ENCODE measurements at regions of chr11 and their contacts with region 1.

Region 1: GRCh38 chr11:4393209-4393857 is at the start of gene TRIM21:
- DNase-seq: peak; percentile 84
- H3K4me3 ChIP-seq: peak within 1 kb of the TSS; percentile 58 to 85 (median 85)
- H3K27ac ChIP-seq: peak within 1 kb of the TSS; percentile 4
- H3K4me1 ChIP-seq: peaks cover 3% of the 10 kb centered on the region
- H3K27me3 ChIP-seq: no peaks in the 10 kb centered on the region
- CTCF ChIP-seq: no peak
- POLR2A ChIP-seq: peak; percentile 40
- total RNA-seq, gene TRIM21: 19.1 and 20.8 TPM in 2 replicates

Region 2: DNA sequence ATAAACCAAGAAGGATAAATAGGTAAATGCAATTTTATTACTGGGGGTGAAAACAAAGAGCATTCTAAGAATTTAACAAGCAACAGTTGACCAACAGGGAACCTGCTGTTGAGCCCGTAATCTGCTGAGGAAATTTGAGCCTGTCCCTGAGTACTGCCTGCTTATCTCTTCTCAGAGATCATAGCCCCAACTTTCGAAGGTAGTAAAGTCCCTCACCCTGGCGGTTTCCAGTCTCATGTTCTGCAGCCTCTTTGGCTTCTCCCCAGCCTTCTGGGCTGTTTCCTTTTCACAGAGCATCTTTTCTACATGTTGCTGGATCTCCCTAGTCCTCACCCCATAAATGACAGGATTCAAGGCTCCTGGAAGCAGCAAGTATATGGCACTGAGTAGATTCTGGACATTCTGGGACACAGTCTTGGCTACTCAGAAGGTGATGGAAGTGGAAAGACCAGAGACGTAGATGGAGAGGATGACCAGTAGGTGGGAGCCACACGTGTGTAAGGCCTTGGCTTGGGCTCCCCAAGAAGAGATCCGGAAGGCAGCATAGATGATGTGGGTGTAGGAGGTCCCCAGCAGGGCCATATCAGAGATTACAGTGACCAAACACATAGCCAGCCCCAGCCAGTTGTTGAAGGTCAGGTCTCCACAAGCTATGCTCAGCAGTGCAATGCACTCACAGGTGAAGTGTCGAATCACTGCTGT is 247.1 kb before region 1 on chr11:
- CTCF ChIA-PET with region 1: no interaction called
- POLR2A ChIA-PET with region 1: no interaction called
- dilution Hi-C with region 1: no loop called
- intact Hi-C with region 1: no loop called
- DNase-seq: no peak
- H3K4me3 ChIP-seq: no peak overlapping the region
- H3K27ac ChIP-seq: no peak overlapping the region
- H3K4me1 ChIP-seq: no peaks in the 10 kb centered on the region
- H3K27me3 ChIP-seq: peaks cover 0 to 1% of the 10 kb centered on the region in 2 experiments
- CTCF ChIP-seq: no peak
- POLR2A ChIP-seq: no peak

Region 3: GRCh38 chr11:4480574-4481566 is 87.5 kb after region 1 on chr11:
- CTCF ChIA-PET with region 1: no interaction called
- POLR2A ChIA-PET with region 1: no interaction called
- dilution Hi-C with region 1: no loop called
- intact Hi-C with region 1: loop called (anchors 1 kb)
- DNase-seq: peak; percentile 66
- H3K4me3 ChIP-seq: no peak overlapping the region
- H3K27ac ChIP-seq: peak overlapping the region; percentile 71
- H3K4me1 ChIP-seq: peaks cover 21% of the 10 kb centered on the region
- H3K27me3 ChIP-seq: peaks cover 0 to 1% of the 10 kb centered on the region in 2 experiments
- CTCF ChIP-seq: no peak
- POLR2A ChIP-seq: no peak

Region 4: DNA sequence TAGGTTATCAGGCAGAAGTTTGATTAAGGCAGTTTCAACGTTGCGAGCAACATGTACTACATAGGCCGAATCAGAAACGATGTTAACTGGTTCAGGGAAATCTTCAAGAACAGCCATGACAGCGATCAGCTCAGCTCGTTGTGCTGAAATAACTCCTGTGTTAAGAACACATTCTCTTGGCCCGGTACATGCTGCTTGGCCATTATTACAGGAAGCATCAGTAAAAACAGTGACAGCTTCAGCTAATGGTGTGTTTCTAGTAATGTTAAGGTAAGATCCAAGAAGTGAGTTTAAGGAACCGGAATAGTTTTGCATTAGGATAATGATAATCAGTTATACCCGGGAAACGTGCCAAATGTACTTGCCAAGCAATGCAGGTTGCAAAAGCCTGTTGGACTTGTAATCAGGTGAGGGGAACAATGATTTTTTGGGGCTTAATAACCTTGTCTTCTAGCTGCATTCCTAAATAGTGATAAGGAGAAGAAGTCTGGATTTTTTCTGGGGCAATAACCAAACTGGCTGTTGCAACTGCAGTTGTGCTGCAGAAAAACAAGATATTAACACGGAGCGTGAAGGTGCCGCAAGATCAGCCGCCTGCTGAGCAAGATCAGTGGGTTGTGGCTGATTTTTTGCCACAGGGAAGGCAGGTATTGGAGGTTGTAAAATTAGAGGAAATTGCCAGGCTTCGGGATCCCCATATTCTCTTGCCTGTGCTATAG is 103.4 kb after region 1 on chr11:
- CTCF ChIA-PET with region 1: interaction called, 10 read pairs
- POLR2A ChIA-PET with region 1: no interaction called
- dilution Hi-C with region 1: no loop called
- intact Hi-C with region 1: loop called (anchors 1 kb)
- DNase-seq: no peak
- H3K4me3 ChIP-seq: no peak overlapping the region
- H3K27ac ChIP-seq: no peak overlapping the region
- H3K4me1 ChIP-seq: no peaks in the 10 kb centered on the region
- H3K27me3 ChIP-seq: peaks cover 18 to 23% of the 10 kb centered on the region in 2 experiments
- CTCF ChIP-seq: no peak
- POLR2A ChIP-seq: no peak

Region 5: DNA sequence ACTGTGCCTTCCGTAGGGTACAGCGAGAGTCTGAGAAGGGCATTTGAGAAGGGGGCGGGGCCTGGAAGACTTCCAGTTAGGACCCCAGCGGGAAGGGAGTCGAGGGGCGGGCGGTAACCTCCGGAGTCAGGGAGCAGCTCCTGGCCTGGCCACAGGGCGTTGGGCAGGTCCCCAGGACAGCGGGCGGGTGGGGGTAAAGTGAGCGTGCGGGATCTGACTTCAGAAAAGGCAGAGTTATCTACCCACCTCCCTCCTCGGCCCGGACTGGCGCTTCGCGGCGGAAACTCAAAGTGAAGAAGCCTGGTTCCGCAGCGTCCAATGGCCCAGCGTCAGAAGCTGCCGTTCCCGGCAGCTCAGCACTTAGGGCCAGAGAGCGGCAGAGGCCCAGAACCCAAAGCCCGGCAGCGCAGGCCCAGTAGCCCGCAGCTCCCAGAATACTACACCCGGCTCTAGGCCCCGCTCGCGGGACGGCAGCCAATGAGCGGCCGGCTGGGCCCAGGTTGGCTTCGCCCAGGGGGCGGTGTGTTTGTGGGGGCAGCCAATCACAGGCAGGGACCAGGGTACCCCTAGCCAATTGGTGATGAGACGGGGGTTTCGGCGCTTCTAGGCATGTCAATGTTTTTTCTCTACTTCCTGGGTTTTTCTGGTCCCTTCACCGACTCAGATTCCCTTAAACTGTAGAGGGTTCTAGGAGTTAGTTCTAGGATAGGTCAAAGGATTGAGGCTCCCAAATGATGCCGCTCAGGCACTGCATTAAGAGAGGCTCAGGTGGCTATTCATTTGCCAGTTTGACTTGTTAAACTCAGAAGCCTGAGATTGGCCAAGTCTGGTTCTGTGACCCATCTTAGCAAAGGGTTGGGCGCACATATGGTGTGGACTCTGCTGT is 214.7 kb after region 1 on chr11 and contains the start of gene TRIM68:
- CTCF ChIA-PET with region 1: no interaction called
- POLR2A ChIA-PET with region 1: no interaction called
- dilution Hi-C with region 1: no loop called
- intact Hi-C with region 1: loop called (anchors 5 kb)
- DNase-seq: peak; percentile 95
- H3K4me3 ChIP-seq: peak within 1 kb of the TSS; percentile 59 to 93 (median 88)
- H3K27ac ChIP-seq: peak within 1 kb of the TSS; percentile 83
- H3K4me1 ChIP-seq: peaks cover 10% of the 10 kb centered on the region
- H3K27me3 ChIP-seq: no peaks in the 10 kb centered on the region
- CTCF ChIP-seq: no peak
- POLR2A ChIP-seq: peak; percentile 81
- total RNA-seq, gene TRIM68: 10.6 and 11.3 TPM in 2 replicates

Measured in endothelial cell of umbilical vein (primary cell).